PC-3 (cell line): ENCODE measurements at regions of chr11 and their contacts with region 1.

Region 1: DNA sequence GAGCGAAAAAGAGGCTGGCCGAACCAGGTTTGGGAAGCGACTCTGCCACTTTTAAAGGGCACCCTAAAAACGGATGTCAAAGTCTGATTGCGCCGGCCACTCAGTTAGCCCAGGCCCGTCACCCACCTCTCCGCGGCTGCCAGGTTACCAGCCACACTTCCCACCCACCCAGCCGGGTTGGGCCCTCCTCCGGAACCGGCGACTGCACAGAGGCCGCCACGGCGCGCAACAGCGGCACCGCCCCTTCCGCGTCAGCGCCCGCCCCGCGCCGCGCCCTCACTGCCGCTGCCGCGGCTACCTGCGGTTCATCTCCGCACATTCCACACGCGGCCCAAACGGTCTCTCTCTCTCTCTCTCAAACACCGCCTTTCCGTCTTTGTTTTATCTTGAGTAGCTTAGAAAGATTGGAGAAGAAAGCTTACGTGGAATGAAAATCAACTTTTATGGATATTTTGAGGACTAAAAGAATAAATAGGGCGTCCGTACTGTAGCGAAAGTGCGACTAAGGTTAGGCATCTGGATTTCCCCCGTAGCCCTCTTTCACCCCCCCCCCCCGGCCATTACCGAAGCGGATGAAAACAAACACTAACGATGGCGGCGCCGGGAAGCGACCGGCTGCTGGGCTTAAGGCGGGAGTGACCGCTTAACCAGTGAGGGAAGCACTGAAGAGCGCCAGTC is at the starts of genes ATG13 and HARBI1:
- DNase-seq: peak; percentile 86
- ATAC-seq: peak; percentile 96
- H3K4me3 ChIP-seq: peak within 1 kb of the TSS; percentile 97
- H3K27ac ChIP-seq: peak within 1 kb of the TSS; percentile 78
- H3K4me1 ChIP-seq: peaks cover 15% of the 10 kb centered on the region
- H3K27me3 ChIP-seq: no peaks in the 10 kb centered on the region
- CTCF ChIP-seq: no peak
- total RNA-seq, gene ATG13: 95.0 and 97.3 TPM in 2 replicates
- total RNA-seq, gene HARBI1: 1.7 and 6.5 TPM in 2 replicates

Region 2: DNA sequence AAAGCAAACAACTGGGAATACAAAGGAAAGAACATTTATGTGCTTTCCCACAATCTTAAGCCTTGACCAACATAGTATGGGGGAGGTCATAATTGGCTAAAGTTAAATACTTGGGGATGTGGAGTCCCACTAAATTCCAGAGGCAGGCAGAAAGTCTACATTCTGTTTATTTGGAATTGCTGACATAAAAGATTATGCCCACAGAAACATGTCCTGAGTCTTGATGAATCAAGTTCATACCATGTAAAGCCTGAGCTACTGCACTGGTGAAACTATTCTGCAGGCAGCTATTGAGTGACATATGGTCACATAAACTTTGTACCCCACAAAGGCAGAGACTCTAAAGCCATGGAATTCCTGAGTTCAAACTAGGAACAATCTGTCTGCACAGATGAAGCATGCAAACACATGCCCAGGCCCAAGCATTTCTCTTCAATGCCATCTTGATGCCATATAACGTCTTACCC is 155.6 kb before region 1 on chr11:
- CTCF ChIA-PET with region 1: no interaction called
- POLR2A ChIA-PET with region 1: no interaction called
- intact Hi-C with region 1: no loop called
- DNase-seq: no peak
- ATAC-seq: no peak
- H3K4me3 ChIP-seq: no peak overlapping the region
- H3K27ac ChIP-seq: no peak overlapping the region
- H3K4me1 ChIP-seq: no peaks in the 10 kb centered on the region
- H3K27me3 ChIP-seq: no peaks in the 10 kb centered on the region
- CTCF ChIP-seq: no peak

Region 3: GRCh38 chr11:46554205-46555055 is 62.7 kb before region 1 on chr11:
- CTCF ChIA-PET with region 1: no interaction called
- POLR2A ChIA-PET with region 1: no interaction called
- intact Hi-C with region 1: loop called (anchors 2 kb)
- DNase-seq: peak; percentile 88
- ATAC-seq: peak; percentile 70
- H3K4me3 ChIP-seq: peak overlapping the region; percentile 25; the same call in 1 of the 2 replicates
- H3K27ac ChIP-seq: peak overlapping the region; percentile 56
- H3K4me1 ChIP-seq: peaks cover 36% of the 10 kb centered on the region
- H3K27me3 ChIP-seq: no peaks in the 10 kb centered on the region
- CTCF ChIP-seq: no peak

Region 4: DNA sequence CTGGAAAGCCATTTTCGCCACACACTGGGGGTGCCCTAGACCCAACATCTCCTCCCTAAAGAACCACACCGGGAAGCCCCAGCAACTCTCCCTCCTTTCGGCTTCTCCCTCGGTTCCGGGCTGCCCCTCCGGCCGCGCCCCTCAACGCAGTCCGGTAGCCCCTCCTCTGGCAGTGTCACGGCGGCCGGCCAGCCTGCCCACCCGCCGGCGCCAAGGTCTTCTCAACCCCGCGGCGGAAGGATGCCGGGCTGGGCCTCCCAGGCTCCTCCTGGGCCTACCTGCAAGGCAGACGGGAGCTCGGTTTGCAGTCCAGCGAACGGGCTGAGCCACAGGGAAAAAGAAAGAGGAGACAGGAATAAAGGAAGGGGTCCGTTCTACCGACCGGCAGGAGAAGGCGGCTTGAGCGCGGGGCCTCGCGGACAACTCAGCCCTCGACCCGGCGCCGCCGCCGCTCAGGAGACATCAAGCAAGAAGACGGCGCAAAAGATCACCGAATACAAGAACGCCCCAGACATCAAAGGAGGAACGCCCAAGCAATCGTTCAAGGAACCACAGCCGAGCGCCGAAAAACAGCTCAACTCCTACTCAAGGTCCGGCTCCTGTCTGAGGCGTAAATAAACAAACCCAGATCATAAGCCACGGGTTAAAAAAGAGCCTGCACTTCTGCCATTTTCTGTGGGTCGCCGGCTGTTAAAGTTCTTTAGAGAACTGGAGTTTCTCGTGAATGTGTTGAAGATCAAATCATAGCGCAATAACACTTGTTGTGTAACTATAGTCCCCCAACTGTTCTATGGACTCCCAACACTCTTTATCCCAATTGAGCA is 23.4 kb before region 1 on chr11 and contains the start of gene AMBRA1:
- CTCF ChIA-PET with region 1: interaction called, 3 read pairs
- POLR2A ChIA-PET with region 1: interaction called, 7 read pairs
- intact Hi-C with region 1: loop called (anchors 2 kb)
- DNase-seq: peak; percentile 89
- ATAC-seq: peak; percentile 92
- H3K4me3 ChIP-seq: peak within 1 kb of the TSS; percentile 94
- H3K27ac ChIP-seq: no peak within 1 kb of the TSS
- H3K4me1 ChIP-seq: peaks cover 19% of the 10 kb centered on the region
- H3K27me3 ChIP-seq: no peaks in the 10 kb centered on the region
- CTCF ChIP-seq: no peak
- total RNA-seq, gene AMBRA1: 15.8 and 18.0 TPM in 2 replicates

Region 5: DNA sequence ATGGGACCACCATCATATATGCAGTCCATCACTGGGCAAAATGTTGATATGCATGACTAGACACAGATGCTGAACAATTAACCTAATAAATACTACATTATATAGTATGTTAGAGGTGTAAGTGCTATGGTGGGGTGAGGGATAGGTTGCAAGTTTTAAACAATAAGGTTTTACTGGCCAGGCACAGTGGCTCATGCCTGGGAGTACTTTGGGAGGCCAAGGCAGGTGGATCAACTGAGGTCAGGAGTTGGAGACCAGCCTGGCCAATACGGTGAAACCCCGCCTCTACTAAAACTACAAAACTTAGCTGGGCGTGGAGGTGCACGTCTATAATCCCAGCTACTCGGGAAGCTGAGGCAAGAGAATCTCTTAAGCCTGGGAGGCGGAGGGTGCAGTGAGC is 130.0 kb after region 1 on chr11:
- CTCF ChIA-PET with region 1: no interaction called
- POLR2A ChIA-PET with region 1: no interaction called
- intact Hi-C with region 1: no loop called
- DNase-seq: no peak
- ATAC-seq: no peak
- H3K4me3 ChIP-seq: no peak overlapping the region
- H3K27ac ChIP-seq: no peak overlapping the region
- H3K4me1 ChIP-seq: no peaks in the 10 kb centered on the region
- H3K27me3 ChIP-seq: no peaks in the 10 kb centered on the region
- CTCF ChIP-seq: no peak

Region 6: GRCh38 chr11:47028195-47029093 is 411.3 kb after region 1 on chr11:
- CTCF ChIA-PET with region 1: no interaction called
- POLR2A ChIA-PET with region 1: interaction called, 15 read pairs
- intact Hi-C with region 1: no loop called
- DNase-seq: no peak
- ATAC-seq: no peak
- H3K4me3 ChIP-seq: no peak overlapping the region
- H3K27ac ChIP-seq: no peak overlapping the region
- H3K4me1 ChIP-seq: no peaks in the 10 kb centered on the region
- H3K27me3 ChIP-seq: no peaks in the 10 kb centered on the region
- CTCF ChIP-seq: no peak